ENCODE measurements at regions of chr12 and their contacts with region 1.

Region 1: DNA sequence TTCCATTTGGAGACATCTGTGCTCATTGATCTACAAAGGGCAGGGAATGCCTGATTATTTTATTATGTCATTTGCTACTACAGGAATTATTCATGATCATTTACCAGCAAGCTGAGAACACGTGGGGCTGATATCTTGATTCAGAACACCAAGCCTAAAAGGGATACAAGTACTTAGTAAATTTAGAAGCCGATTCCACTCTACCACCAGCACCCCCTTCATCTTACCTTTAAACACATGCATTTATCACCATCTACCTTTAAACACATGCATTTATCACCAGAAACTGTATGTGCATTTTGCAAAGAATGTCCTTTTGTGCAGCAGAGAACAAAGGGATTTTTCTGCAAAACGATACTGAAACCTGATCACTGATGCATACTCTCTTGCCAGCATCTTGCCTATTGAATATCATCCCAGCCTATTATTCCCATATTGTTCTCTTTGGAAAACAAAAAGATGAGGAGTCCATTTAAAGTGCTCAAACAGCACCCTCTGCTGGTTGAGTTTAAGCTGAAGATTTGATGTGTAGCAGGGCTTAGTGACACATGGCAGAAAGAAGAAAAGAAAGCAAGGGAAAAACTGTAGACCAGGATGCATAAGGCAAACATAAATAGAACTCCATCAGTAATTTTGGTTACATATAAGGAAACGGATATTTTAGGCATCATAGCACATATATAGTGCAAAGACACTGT is 132.6 kb upstream of the PLEKHG7 start:
- DNase-seq: peak; percentile 75
- H3K4me3 Mint-ChIP-seq: no peak overlapping the region
- H3K27ac Mint-ChIP-seq: no peak overlapping the region
- H3K4me1 Mint-ChIP-seq: no peaks in the 10 kb centered on the region
- H3K27me3 Mint-ChIP-seq: no peaks in the 10 kb centered on the region
- CTCF ChIP-seq: peak; percentile 79

Region 2: DNA sequence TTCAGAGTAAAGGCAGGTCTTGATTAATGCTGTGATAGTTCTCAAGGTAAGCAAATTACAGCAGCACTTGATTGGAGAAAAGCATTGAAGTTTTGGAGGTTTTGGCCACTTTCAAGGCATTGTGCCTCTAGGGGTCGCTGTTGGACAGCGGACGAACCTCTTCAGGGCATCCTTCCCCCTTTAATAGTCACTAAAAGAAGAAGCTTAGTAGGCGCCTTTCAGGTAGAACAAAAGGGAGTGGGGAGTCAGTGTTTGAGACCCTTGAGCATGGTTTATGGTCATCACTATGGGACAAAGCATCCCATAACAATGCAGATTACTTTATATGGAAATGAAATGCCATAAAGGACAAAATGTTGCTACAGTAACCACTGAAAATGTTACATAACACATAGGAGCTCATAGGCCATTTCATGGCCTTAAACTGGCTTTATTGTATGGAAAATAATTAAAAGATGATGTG is 1188.1 kb before region 1 on chr12:
- CTCF ChIA-PET with region 1: interaction called, 5 read pairs
- intact Hi-C with region 1: loop called (anchors 1 kb)
- DNase-seq: peak; percentile 89
- H3K4me3 Mint-ChIP-seq: peak overlapping the region; percentile 48
- H3K27ac Mint-ChIP-seq: peak overlapping the region; percentile 64
- H3K4me1 Mint-ChIP-seq: peaks cover 15% of the 10 kb centered on the region
- H3K27me3 Mint-ChIP-seq: no peaks in the 10 kb centered on the region
- CTCF ChIP-seq: peak; percentile 87

Region 3: GRCh38 chr12:92065018-92065499 is 505.1 kb before region 1 on chr12:
- CTCF ChIA-PET with region 1: no interaction called
- intact Hi-C with region 1: loop called (anchors 10 kb)
- DNase-seq: peak; percentile 60
- H3K4me3 Mint-ChIP-seq: peak overlapping the region; percentile 60
- H3K27ac Mint-ChIP-seq: peak overlapping the region; percentile 85
- H3K4me1 Mint-ChIP-seq: peaks cover 79% of the 10 kb centered on the region
- H3K27me3 Mint-ChIP-seq: no peaks in the 10 kb centered on the region
- CTCF ChIP-seq: no peak

Region 4: GRCh38 chr12:92408072-92408900 is 161.9 kb before region 1 on chr12:
- CTCF ChIA-PET with region 1: no interaction called
- intact Hi-C with region 1: loop called (anchors 1 kb)
- DNase-seq: peak; percentile 66
- H3K4me3 Mint-ChIP-seq: no peak overlapping the region
- H3K27ac Mint-ChIP-seq: no peak overlapping the region
- H3K4me1 Mint-ChIP-seq: no peaks in the 10 kb centered on the region
- H3K27me3 Mint-ChIP-seq: no peaks in the 10 kb centered on the region
- CTCF ChIP-seq: peak; percentile 64

Region 5: GRCh38 chr12:92539113-92539749 is 31.0 kb before region 1 on chr12:
- CTCF ChIA-PET with region 1: no interaction called
- intact Hi-C with region 1: loop called (anchors 2 kb)
- DNase-seq: peak; percentile 63
- H3K4me3 Mint-ChIP-seq: peak overlapping the region; percentile 6
- H3K27ac Mint-ChIP-seq: peak overlapping the region; percentile 95
- H3K4me1 Mint-ChIP-seq: peaks cover 74% of the 10 kb centered on the region
- H3K27me3 Mint-ChIP-seq: no peaks in the 10 kb centered on the region
- CTCF ChIP-seq: no peak

Region 6: DNA sequence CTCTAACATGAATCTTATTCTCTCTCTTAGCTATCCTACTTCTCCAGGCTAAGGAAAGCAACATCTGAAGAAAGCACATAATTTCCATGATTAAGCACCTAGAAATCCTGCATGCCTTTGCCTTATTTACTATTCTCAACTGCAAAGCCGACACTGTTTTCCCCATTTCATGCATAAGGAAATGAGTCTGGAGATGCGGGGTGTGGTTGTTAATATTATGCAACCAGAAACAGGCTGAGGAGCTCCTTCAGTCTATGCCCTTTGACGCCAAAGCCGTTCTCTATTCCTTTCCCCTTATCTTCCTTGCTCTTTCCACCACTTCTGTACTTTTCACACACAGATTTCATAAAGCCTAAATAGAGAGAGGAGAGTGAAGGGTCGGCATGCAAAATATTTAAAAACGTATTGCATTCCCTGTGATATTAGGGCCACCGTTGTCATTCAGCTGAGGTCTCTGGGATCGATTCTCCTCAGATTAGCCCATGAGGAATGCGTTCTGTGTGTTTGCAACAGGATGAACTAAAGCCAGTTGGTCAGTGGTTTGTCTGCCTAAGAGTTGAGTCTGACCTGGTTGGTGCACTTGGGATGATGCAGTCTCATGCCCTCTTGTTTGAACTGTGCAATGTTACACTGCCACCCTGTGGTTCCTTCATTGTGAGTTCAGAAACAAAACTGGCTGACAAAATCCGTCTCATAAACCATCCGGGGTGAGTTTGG is 79.5 kb after region 1 on chr12:
- CTCF ChIA-PET with region 1: interaction called, 13 read pairs
- intact Hi-C with region 1: loop called (anchors 1 kb)
- DNase-seq: peak; percentile 78
- H3K4me3 Mint-ChIP-seq: peak overlapping the region; percentile 54
- H3K27ac Mint-ChIP-seq: peak overlapping the region; percentile 71
- H3K4me1 Mint-ChIP-seq: peaks cover 47% of the 10 kb centered on the region
- H3K27me3 Mint-ChIP-seq: no peaks in the 10 kb centered on the region
- CTCF ChIP-seq: peak; percentile 63